Head of caudate nucleus (tissue), 42 donors: ENCODE measurements at regions of chr19 and their contacts with region 1.

Region 1: DNA sequence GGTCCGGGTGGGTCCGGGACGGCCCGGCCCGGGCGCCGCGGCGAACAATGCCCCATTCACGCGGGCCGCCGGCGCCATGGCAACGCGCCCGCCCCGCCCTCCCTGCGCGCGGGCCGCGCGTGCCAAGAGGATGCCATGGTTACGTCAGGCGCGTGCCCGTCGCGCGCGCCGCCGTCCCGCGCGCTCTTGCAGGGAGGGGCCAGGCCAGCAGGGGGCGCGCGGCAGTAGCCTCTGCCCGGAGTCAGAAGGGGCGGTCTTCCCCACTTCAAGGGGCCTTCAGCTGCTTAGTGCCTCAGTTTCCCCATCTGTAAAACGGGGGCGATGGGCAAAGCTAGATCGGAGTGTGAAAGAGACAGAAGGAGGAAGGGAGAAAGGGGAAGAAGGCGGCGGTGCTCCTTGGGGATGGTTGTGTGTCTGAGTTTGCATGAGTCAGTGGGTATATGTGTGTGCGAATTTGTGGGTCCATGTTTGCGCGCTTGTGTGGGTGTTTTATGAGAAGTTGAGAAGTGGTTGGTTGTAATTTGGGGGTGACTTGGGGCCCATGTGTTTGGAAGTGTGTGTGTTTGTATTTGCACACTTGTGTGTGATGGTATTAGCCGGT is 11.6 kb upstream of the NFIX start:
- DNase-seq: peak; percentile 59 to 94 (median 86)

Region 2: GRCh38 chr19:13093407-13094105 is 109.9 kb after region 1 on chr19:
- intact Hi-C with region 1: loop called (anchors 5 kb)
- DNase-seq: peak; percentile 72 to 96 (median 88)